BJ (cell line): ENCODE measurements at regions of chr9 and their contacts with region 1.

Region 1: GRCh38 chr9:36092509-36093215 is 43.9 kb upstream of the GLIPR2 start:
- DNase-seq: no peak
- H3K4me3 ChIP-seq: no peak overlapping the region
- H3K27me3 ChIP-seq: no peaks in the 10 kb centered on the region
- CTCF ChIP-seq: no peak

Region 2: GRCh38 chr9:36102742-36103495 is 10.3 kb after region 1 on chr9:
- CTCF ChIA-PET with region 1: interaction called, 13 read pairs
- POLR2A ChIA-PET with region 1: no interaction called
- DNase-seq: no peak
- H3K4me3 ChIP-seq: no peak overlapping the region
- H3K27me3 ChIP-seq: no peaks in the 10 kb centered on the region
- CTCF ChIP-seq: peak; percentile 59

Region 3: GRCh38 chr9:36116593-36116992 is 23.9 kb after region 1 on chr9:
- CTCF ChIA-PET with region 1: no interaction called
- POLR2A ChIA-PET with region 1: no interaction called
- DNase-seq: no peak
- H3K4me3 ChIP-seq: no peak overlapping the region
- H3K27me3 ChIP-seq: no peaks in the 10 kb centered on the region
- CTCF ChIP-seq: no peak